ENCODE measurements at regions of chr4 and their contacts with region 1.

Region 1: GRCh38 chr4:48963042-48963679 is 22.9 kb upstream of the CWH43 start:
- DNase-seq: peak; percentile 91
- H3K4me3 Mint-ChIP-seq: no peak overlapping the region
- H3K27ac Mint-ChIP-seq: no peak overlapping the region
- H3K4me1 Mint-ChIP-seq: peaks cover 19% of the 10 kb centered on the region
- H3K27me3 Mint-ChIP-seq: no peaks in the 10 kb centered on the region
- CTCF ChIP-seq: peak; percentile 99

Region 2: GRCh38 chr4:48445704-48446103 is 517.5 kb before region 1 on chr4:
- CTCF ChIA-PET with region 1: interaction called, 3 read pairs
- POLR2A ChIA-PET with region 1: no interaction called
- intact Hi-C with region 1: loop called (anchors 10 kb)
- DNase-seq: peak; percentile 17
- H3K4me3 Mint-ChIP-seq: no peak overlapping the region
- H3K27ac Mint-ChIP-seq: no peak overlapping the region
- H3K4me1 Mint-ChIP-seq: no peaks in the 10 kb centered on the region
- H3K27me3 Mint-ChIP-seq: no peaks in the 10 kb centered on the region
- CTCF ChIP-seq: peak; percentile 50

Region 3: DNA sequence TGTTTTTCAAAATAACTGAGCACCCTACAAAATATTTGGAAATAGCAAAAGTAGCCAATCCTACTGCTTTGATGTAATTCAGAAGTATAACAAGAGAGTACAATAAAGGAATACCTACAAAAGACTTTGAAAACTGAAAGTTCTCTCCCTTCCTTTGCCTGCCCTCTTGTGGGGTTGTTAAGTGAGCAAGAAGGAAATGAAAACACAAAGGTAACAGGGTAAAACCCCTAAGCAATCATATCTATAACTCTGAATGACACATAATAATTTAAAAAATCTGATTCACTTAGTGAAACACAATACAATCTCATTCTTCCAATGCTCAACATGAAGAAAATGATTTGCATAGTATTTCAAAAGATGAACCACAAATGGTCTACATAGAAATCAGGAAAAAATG is 281.3 kb before region 1 on chr4:
- CTCF ChIA-PET with region 1: interaction called, 3 read pairs
- POLR2A ChIA-PET with region 1: no interaction called
- intact Hi-C with region 1: loop called (anchors 5 kb)
- DNase-seq: peak; percentile 45
- H3K4me3 Mint-ChIP-seq: no peak overlapping the region
- H3K27ac Mint-ChIP-seq: no peak overlapping the region
- H3K4me1 Mint-ChIP-seq: peaks cover 12% of the 10 kb centered on the region
- H3K27me3 Mint-ChIP-seq: no peaks in the 10 kb centered on the region
- CTCF ChIP-seq: peak; percentile 29

Region 4: DNA sequence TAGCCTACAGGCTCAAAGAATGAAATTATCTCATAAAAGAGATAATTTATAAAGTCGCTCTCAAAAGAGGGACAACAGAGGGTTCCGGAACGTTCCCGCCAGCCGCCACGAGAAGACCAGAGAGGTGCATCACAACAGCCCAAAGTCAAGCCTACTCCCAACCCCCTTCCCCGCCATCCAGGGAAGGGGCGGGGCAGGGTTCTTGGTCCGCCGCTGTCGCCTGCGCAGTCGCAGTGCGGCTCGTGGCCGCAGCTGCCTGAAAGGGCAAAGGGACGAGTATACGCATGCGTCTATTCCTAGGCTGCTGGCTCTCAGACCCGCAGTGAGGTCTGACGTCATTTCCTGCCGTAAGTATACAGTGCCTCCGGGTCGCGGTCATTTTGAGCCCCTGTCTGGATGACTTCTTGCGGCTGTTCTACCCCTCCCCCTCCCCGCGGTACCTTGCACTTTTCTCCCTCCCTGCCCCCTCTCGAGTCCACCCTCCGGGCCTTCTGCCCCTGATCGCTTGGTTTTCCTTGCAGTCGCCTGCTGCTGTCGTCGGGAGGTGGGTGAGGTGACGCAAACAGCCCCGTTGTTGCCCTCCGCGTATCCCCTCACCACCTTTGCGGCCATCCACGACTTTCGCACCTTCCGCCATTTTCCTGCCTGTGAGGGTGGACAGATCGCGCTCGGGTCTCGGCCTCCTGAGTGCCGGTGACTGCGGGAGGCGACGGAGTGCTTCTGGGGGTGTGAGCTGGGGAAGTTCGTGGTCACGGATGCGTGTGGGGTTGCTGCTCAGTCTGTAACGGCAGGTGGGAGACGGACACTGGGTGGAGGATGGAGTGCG is 132.2 kb before region 1 on chr4 and contains the start of gene OCIAD1:
- CTCF ChIA-PET with region 1: interaction called, 3 read pairs
- POLR2A ChIA-PET with region 1: interaction called, 3 read pairs
- intact Hi-C with region 1: loop called (anchors 2 kb)
- DNase-seq: peak; percentile 99
- H3K4me3 Mint-ChIP-seq: peak within 1 kb of the TSS; percentile 95
- H3K27ac Mint-ChIP-seq: peak within 1 kb of the TSS; percentile 97
- H3K4me1 Mint-ChIP-seq: peaks cover 5% of the 10 kb centered on the region
- H3K27me3 Mint-ChIP-seq: no peaks in the 10 kb centered on the region
- CTCF ChIP-seq: no peak
- total RNA-seq, gene OCIAD1: 207 and 224 TPM in 2 replicates

Region 5: DNA sequence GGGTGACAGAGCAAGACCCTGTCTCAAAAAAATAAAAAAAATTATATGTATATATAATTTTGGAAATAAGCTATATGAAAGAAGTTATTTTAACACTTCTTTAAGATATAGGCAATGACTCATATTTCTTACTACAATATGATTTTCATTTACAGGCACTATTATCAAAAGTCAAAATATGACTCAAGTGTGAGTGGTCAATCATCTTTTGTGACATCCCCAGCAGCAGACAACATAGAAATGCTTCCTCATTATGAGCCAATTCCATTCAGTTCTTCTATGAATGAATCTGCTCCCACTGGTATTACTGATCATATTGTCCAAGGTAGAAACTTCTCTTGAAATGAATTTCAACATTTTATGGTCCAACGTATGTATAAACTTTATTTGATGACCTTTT is 111.5 kb before region 1 on chr4:
- CTCF ChIA-PET with region 1: interaction called, 4 read pairs
- POLR2A ChIA-PET with region 1: interaction called, 4 read pairs
- intact Hi-C with region 1: loop called (anchors 5 kb)
- DNase-seq: no peak
- H3K4me3 Mint-ChIP-seq: no peak overlapping the region
- H3K27ac Mint-ChIP-seq: no peak overlapping the region
- H3K4me1 Mint-ChIP-seq: peaks cover 6% of the 10 kb centered on the region
- H3K27me3 Mint-ChIP-seq: no peaks in the 10 kb centered on the region
- CTCF ChIP-seq: no peak